WTC11 (cell line): ENCODE measurements at regions of chr17 and their contacts with region 1.

Region 1: GRCh38 chr17:17812211-17813057 is 24.4 kb downstream of the SREBF1 start:
- DNase-seq: peak; percentile 93
- ATAC-seq: peak; percentile 29
- H3K4me3 Mint-ChIP-seq: peak overlapping the region; percentile 33
- H3K27ac Mint-ChIP-seq: peak overlapping the region; percentile 94; the same call in 1 of the 2 replicates
- H3K4me1 Mint-ChIP-seq: peaks cover 22% of the 10 kb centered on the region
- H3K27me3 Mint-ChIP-seq: peaks cover 16% of the 10 kb centered on the region
- CTCF ChIP-seq: peak; percentile 100

Region 2: GRCh38 chr17:17729620-17730249 is 82.7 kb before region 1 on chr17:
- CTCF ChIA-PET with region 1: no interaction called
- POLR2A ChIA-PET with region 1: no interaction called
- DNase-seq: peak; percentile 73
- ATAC-seq: peak; percentile 80
- H3K4me3 Mint-ChIP-seq: no peak overlapping the region
- H3K27ac Mint-ChIP-seq: no peak overlapping the region
- H3K4me1 Mint-ChIP-seq: peaks cover 37% of the 10 kb centered on the region
- H3K27me3 Mint-ChIP-seq: peaks cover 64% of the 10 kb centered on the region
- CTCF ChIP-seq: peak; percentile 71

Region 3: GRCh38 chr17:17783116-17783824 is 29.2 kb before region 1 on chr17:
- CTCF ChIA-PET with region 1: interaction called, 38 read pairs
- POLR2A ChIA-PET with region 1: no interaction called
- DNase-seq: peak; percentile 79
- ATAC-seq: peak; percentile 13
- H3K4me3 Mint-ChIP-seq: peak overlapping the region; percentile 78
- H3K27ac Mint-ChIP-seq: no peak overlapping the region
- H3K4me1 Mint-ChIP-seq: peaks cover 51% of the 10 kb centered on the region
- H3K27me3 Mint-ChIP-seq: peaks cover 27% of the 10 kb centered on the region
- CTCF ChIP-seq: no peak

Region 4: GRCh38 chr17:17823433-17824118 is 11.1 kb after region 1 on chr17:
- CTCF ChIA-PET with region 1: interaction called, 14 read pairs
- POLR2A ChIA-PET with region 1: interaction called, 7 read pairs
- DNase-seq: peak; percentile 96
- ATAC-seq: peak; percentile 87
- H3K4me3 Mint-ChIP-seq: peak overlapping the region; percentile 52
- H3K27ac Mint-ChIP-seq: peak overlapping the region; percentile 99
- H3K4me1 Mint-ChIP-seq: peaks cover 77% of the 10 kb centered on the region
- H3K27me3 Mint-ChIP-seq: no peaks in the 10 kb centered on the region
- CTCF ChIP-seq: no peak

Region 5: DNA sequence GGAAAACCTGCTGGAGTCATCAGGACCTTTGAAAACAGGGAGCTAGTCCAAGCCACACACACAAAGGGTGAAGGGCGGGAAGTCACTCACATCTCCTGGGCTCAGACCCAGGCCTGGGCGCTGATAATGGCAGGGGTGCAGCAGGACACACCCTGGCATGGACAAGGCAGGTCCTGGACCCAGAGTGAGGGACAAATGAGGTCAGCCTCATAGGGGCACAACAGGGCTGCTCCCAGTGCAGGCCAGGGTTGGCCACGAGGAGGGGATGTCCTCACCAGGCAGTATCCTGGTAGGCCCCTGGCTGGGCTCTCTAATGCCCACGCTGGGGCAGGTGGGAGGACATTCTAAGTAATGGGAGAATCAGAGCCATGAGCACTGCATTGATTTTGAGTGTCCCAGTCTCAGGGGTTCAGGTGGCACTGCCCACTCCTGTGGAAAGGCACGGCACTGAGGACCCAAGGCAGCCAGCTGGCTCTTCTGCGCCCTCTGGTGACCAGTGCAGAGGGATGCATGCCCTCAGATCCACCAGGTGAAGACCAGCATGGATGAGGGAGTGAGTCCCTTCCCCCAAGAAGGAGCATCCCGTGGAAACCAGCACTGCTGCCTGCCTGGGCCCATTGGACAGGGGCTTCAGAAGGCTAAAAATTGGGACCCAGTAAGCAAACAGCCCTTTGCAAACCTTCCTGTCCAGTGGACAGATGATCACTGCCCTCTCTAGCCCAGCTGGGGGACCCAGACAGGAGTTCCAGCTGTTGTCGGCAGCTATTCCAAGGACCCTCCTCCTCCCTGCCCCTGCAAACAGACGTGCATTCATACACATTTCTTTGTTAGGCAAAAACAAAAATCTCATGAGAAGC is 47.7 kb after region 1 on chr17:
- CTCF ChIA-PET with region 1: interaction called, 60 read pairs
- POLR2A ChIA-PET with region 1: interaction called, 3 read pairs
- DNase-seq: peak; percentile 75
- ATAC-seq: peak; percentile 93
- H3K4me3 Mint-ChIP-seq: no peak overlapping the region
- H3K27ac Mint-ChIP-seq: no peak overlapping the region
- H3K4me1 Mint-ChIP-seq: peaks cover 11% of the 10 kb centered on the region
- H3K27me3 Mint-ChIP-seq: no peaks in the 10 kb centered on the region
- CTCF ChIP-seq: peak; percentile 94

Region 6: GRCh38 chr17:17890773-17891759 is 78.6 kb after region 1 on chr17:
- CTCF ChIA-PET with region 1: interaction called, 47 read pairs
- POLR2A ChIA-PET with region 1: no interaction called
- DNase-seq: peak; percentile 70
- ATAC-seq: peak; percentile 84
- H3K4me3 Mint-ChIP-seq: no peak overlapping the region
- H3K27ac Mint-ChIP-seq: peak overlapping the region; percentile 71; the same call in 1 of the 2 replicates
- H3K4me1 Mint-ChIP-seq: peaks cover 32% of the 10 kb centered on the region
- H3K27me3 Mint-ChIP-seq: no peaks in the 10 kb centered on the region
- CTCF ChIP-seq: peak; percentile 59